Aorta (tissue), 5 donors: ENCODE measurements at regions of chr5 and their contacts with region 1.

Region 1: DNA sequence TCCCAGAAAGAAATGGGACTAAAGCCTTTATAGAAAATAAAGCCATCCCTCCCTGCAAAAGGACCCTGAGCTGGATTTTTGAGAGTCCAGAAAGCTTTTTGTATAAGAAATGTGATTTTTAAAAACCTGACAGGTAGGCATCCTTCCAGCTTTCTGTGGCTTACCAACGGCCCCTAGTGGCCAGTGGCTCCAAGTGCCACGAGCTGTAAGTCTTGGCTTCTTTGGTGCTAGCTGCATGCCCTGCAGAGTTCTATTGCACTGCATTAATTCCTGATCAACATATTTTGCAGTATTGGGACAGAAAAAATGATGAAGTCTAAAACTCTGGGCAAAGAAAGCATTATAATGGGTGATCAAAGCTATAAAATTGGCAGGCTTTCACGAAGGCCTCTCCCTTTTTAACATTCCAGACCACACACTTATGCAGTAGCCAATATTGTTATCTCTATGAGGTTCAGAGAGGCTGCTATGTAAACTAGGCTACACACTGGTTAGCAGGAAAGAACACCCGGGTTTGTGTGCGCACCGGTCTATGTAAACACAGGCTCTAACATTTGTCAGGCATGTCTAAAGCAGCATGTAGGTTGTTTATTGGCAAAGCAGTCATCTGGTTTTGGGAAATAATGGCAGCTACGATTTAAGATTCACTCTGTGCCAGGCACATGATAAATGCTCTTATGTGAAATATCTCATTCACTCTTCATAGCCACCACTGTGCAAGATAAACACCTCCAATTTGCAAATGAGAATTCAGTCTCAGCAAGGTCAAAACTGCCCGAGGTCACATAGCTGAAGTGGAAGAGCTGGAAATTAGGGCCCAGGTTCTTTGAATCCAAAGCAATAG is 55.2 kb downstream of the NMUR2 start:
- DNase-seq: peak; percentile 40 to 73
- ATAC-seq: no peak
- H3K4me3 ChIP-seq: no peak overlapping the region
- H3K27ac ChIP-seq: no peak overlapping the region
- H3K4me1 ChIP-seq: no peaks in the 10 kb centered on the region
- H3K27me3 ChIP-seq: no peaks in the 10 kb centered on the region

Region 2: GRCh38 chr5:151758430-151759241 is 591.3 kb before region 1 on chr5 and contains the start of gene ATOX1:
- intact Hi-C with region 1: loop called in 1 of 2 experiments (anchors 5 kb)
- DNase-seq: peak; percentile 95 to 97
- ATAC-seq: peak; percentile 100
- H3K4me3 ChIP-seq: peak within 1 kb of the TSS; percentile 84 to 86
- H3K27ac ChIP-seq: peak within 1 kb of the TSS; percentile 31 to 82
- H3K4me1 ChIP-seq: no peaks in the 10 kb centered on the region
- H3K27me3 ChIP-seq: no peaks in the 10 kb centered on the region
- total RNA-seq, gene ATOX1: 61.7 to 64.7 TPM

Region 3: GRCh38 chr5:152142840-152143469 is 206.9 kb before region 1 on chr5:
- intact Hi-C with region 1: loop called (anchors 5 to 10 kb)
- DNase-seq: peak; percentile 59 to 81
- ATAC-seq: peak; percentile 73
- H3K4me3 ChIP-seq: no peak overlapping the region
- H3K27ac ChIP-seq: no peak overlapping the region
- H3K4me1 ChIP-seq: no peaks in the 10 kb centered on the region
- H3K27me3 ChIP-seq: no peaks in the 10 kb centered on the region